Endothelial cell of umbilical vein (primary cell): ENCODE measurements at regions of chr9 and their contacts with region 1.

Region 1: DNA sequence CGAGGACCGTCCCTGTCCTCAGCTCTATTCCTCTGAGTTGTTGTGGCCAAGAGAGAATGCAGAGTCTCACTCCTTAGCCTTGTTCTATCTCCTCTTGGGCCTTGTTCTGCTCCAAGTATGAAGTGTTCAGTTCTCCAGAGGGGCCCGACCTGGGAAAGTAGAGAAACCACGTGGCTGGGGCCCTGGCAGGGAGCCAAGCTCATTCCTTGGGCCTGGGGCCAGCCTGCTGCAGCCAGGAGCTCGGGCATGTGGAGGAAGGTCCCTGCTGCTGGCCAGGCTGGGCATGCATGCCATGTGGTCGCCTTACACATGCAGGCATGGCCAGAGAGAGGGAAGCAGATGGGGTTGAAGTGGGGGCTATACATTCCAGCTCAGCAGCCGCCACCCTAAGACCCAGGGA is 60.7 kb downstream of the COL27A1 start:
- DNase-seq: peak; percentile 77
- H3K4me3 ChIP-seq: no peak overlapping the region
- H3K27ac ChIP-seq: no peak overlapping the region
- H3K4me1 ChIP-seq: peaks cover 18% of the 10 kb centered on the region
- H3K27me3 ChIP-seq: no peaks in the 10 kb centered on the region
- CTCF ChIP-seq: no peak
- POLR2A ChIP-seq: no peak

Region 2: GRCh38 chr9:114180696-114181606 is 35.1 kb before region 1 on chr9:
- CTCF ChIA-PET with region 1: interaction called, 6 read pairs
- POLR2A ChIA-PET with region 1: no interaction called
- dilution Hi-C with region 1: no loop called
- intact Hi-C with region 1: loop called (anchors 5 kb)
- DNase-seq: peak; percentile 50
- H3K4me3 ChIP-seq: no peak overlapping the region
- H3K27ac ChIP-seq: no peak overlapping the region
- H3K4me1 ChIP-seq: peaks cover 20% of the 10 kb centered on the region
- H3K27me3 ChIP-seq: no peaks in the 10 kb centered on the region
- CTCF ChIP-seq: no peak
- POLR2A ChIP-seq: peak; percentile 15